HEK293 (cell line): ENCODE measurements at regions of chr5 and their contacts with region 1.

Region 1: DNA sequence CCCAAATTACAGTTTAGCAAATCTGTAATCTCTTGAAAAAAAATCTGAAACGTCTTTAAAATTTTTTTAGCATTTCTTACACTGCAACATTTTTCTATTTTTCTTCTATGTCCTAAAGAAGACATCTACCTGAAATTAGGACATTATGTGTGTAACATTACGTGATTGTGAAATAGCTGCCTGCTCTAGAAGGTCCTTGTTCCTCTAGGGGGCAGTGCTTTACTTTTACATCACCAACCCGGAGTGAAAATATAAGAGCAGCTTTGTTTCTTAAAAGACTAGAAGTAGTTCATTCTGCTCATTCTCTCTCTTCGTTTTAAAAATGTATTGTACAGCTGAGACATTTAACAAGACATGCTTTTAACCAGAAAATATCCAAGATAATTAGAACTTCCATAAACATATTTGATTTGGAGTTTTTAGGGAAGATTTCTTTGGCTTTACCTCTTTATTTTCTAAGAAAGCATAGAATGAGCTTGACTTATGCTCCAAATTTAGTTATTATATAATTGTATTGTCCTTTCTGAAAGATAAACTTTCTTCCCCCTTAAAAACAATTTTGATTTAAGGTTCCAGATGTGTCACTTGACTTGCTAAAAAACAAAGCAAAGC is 48.1 kb upstream of the RIOK2 start:
- H3K4me3 ChIP-seq: no peak overlapping the region
- H3K27ac ChIP-seq: no peak overlapping the region
- H3K4me1 ChIP-seq: no peaks in the 10 kb centered on the region
- CTCF ChIP-seq: peak; percentile 32; the same call in 1 of the 2 replicates

Region 2: GRCh38 chr5:97243353-97243752 is 12.2 kb after region 1 on chr5:
- CTCF ChIA-PET with region 1: interaction called, 10 read pairs
- POLR2A ChIA-PET with region 1: no interaction called
- H3K4me3 ChIP-seq: no peak overlapping the region
- H3K27ac ChIP-seq: no peak overlapping the region
- H3K4me1 ChIP-seq: no peaks in the 10 kb centered on the region
- CTCF ChIP-seq: no peak

Region 3: DNA sequence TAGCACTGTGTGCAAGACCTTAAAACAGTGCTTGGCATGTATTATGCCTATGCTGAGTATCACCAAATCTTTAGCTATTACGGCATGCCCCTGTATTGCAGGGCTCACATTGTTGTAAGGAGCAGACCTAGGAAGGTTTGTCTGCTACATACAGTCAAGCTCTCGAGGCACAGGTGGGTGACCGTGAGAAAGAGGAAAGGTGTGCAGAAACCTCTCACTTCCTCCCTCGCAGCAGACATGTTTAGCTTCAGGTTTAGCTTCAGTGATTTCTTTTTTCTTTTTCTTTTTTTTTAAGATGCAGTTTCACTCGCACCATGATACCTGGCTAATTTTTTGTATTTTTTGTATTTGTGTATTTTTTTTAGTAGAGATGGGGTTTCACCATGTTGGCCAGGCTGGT is 227.7 kb after region 1 on chr5:
- CTCF ChIA-PET with region 1: no interaction called
- POLR2A ChIA-PET with region 1: no interaction called
- H3K4me3 ChIP-seq: no peak overlapping the region
- H3K27ac ChIP-seq: no peak overlapping the region
- H3K4me1 ChIP-seq: no peaks in the 10 kb centered on the region
- CTCF ChIP-seq: no peak

Region 4: GRCh38 chr5:97534166-97534565 is 303.0 kb after region 1 on chr5:
- CTCF ChIA-PET with region 1: interaction called, 25 read pairs
- POLR2A ChIA-PET with region 1: no interaction called
- H3K4me3 ChIP-seq: no peak overlapping the region
- H3K27ac ChIP-seq: no peak overlapping the region
- H3K4me1 ChIP-seq: no peaks in the 10 kb centered on the region
- CTCF ChIP-seq: no peak